ENCODE measurements at regions of chr9 and their contacts with region 1.

Region 1: GRCh38 chr9:105656131-105656921 is 5.9 kb upstream of the TAL2 start:
- DNase-seq: peak; percentile 31
- ATAC-seq: peak; percentile 72
- H3K4me3 Mint-ChIP-seq: peak overlapping the region; percentile 87
- H3K27ac Mint-ChIP-seq: no peak overlapping the region
- H3K4me1 Mint-ChIP-seq: peaks cover 18% of the 10 kb centered on the region
- H3K27me3 Mint-ChIP-seq: peaks cover 17% of the 10 kb centered on the region
- CTCF ChIP-seq: no peak

Region 2: DNA sequence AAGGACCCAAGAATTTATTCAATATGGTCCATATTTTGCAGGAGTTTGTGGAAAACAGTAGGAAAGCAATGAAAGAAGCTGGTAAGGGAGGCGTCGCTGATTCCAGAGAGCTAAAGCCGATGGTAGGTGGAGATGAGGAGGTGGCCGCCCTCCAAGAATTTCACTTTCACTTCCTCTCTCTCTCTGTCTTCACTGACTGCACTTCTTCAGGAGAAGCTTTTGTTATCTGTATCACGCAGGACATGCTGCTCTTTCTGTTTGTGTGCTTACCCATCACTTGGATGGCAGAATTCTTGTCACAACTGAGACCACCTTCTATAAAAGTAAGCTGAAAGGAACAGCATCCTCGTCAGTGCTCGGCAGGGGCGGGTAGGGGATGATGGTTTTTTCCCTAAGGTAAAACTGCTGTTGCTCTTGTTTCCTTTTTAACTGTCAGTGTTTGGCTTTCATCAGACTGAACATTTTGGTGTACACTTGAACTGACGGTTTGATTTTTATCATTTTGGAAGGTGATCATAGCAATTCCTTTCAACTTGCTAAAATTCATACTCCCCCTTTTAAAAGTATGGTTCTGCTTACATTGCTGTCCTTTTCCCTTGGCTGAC is 270.8 kb before region 1 on chr9:
- CTCF ChIA-PET with region 1: no interaction called
- POLR2A ChIA-PET with region 1: no interaction called
- intact Hi-C with region 1: loop called (anchors 5 kb)
- DNase-seq: peak; percentile 17
- ATAC-seq: peak; percentile 94
- H3K4me3 Mint-ChIP-seq: peak overlapping the region; percentile 77
- H3K27ac Mint-ChIP-seq: peak overlapping the region; percentile 73
- H3K4me1 Mint-ChIP-seq: peaks cover 14% of the 10 kb centered on the region
- H3K27me3 Mint-ChIP-seq: no peaks in the 10 kb centered on the region
- CTCF ChIP-seq: no peak